T-cell (primary cell): ENCODE measurements at regions of chr1 and their contacts with region 1.

Region 1: DNA sequence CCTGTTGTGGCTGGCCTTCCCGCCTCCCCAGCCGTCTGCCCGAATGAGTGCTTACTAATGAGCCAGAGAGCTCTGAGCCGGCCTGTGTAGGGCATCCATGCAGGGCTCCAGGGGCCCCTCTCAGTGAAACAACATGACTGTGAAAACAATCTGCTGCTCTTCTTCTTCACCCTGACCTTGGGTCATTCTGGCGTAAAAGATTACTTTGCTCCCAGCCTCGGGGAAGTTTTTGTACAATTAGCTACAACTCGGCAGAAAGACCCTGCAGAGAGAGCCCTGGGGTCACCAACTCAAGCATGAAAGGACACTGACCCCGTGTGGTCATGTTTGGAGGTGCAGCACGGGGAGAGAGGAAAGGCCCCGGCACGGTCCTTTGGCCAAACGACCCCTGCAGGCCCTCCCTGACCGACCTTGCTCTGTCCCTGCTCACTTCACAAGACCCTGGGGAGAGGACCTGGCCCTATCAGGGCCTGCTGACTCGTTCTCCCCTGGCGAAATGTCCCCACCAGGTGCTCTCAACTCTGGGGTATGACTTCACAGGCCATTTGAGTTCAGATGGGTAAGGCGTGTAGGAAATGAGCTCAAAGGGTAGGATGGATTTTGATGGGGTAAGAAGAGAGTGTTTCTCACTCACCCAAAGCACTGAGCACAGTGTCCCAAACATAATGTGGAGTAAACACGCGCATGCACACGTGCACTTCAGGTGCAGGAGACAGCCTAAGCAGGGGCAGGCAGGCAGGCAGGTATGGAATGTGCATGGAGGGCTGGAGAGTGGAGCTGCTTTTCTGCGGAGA is 22.9 kb upstream of the FAM20B start:
- DNase-seq: peak in 33 of 35 experiments; percentile 16 to 74 (median 53)
- ATAC-seq: peak; percentile 74 to 78 (median 76)
- H3K4me3 ChIP-seq: no peak overlapping the region
- H3K4me3 Mint-ChIP-seq: peak overlapping the region in 1 of 3 donors; percentile 40
- H3K27ac ChIP-seq: peak overlapping the region; percentile 16
- H3K27ac Mint-ChIP-seq: peak overlapping the region; percentile 12 to 89
- H3K4me1 ChIP-seq: peaks cover 4 to 23% of the 10 kb centered on the region in 2 experiments
- H3K4me1 Mint-ChIP-seq: peaks cover 18 to 20% (median 19%) of the 10 kb centered on the region in 3 donors
- H3K27me3 ChIP-seq: peaks cover 0 to 6% of the 10 kb centered on the region in 2 experiments
- H3K27me3 Mint-ChIP-seq: no peaks in the 10 kb centered on the region

Region 2: GRCh38 chr1:178532392-178532791 is 470.4 kb before region 1 on chr1:
- CTCF ChIA-PET with region 1: interaction called, 4 to 21 read pairs
- POLR2A ChIA-PET with region 1: no interaction called
- DNase-seq: peak in 34 of 35 experiments; percentile 36 to 85 (median 61)
- ATAC-seq: peak; percentile 73 to 80 (median 75)
- H3K4me3 ChIP-seq: no peak overlapping the region
- H3K4me3 Mint-ChIP-seq: no peak overlapping the region
- H3K27ac ChIP-seq: no peak overlapping the region
- H3K27ac Mint-ChIP-seq: no peak overlapping the region
- H3K4me1 ChIP-seq: peaks cover 0 to 7% of the 10 kb centered on the region in 2 experiments
- H3K4me1 Mint-ChIP-seq: peaks cover 0 to 4% (median 3%) of the 10 kb centered on the region in 3 donors
- H3K27me3 ChIP-seq: peaks cover 0 to 2% of the 10 kb centered on the region in 2 experiments
- H3K27me3 Mint-ChIP-seq: peaks cover 0 to 2% of the 10 kb centered on the region in 2 donors

Region 3: GRCh38 chr1:178542560-178543356 is 460.0 kb before region 1 on chr1:
- CTCF ChIA-PET with region 1: interaction called in 1 of 2 experiments, 12 read pairs
- POLR2A ChIA-PET with region 1: no interaction called
- DNase-seq: peak; percentile 53 to 90 (median 78)
- ATAC-seq: peak; percentile 90 to 92 (median 91)
- H3K4me3 ChIP-seq: peak overlapping the region; percentile 77 to 92
- H3K4me3 Mint-ChIP-seq: peak overlapping the region; percentile 84 to 90 (median 88)
- H3K27ac ChIP-seq: peak overlapping the region; percentile 28
- H3K27ac Mint-ChIP-seq: peak overlapping the region; percentile 61 to 88
- H3K4me1 ChIP-seq: peaks cover 0 to 19% of the 10 kb centered on the region in 2 experiments
- H3K4me1 Mint-ChIP-seq: peaks cover 9 to 21% (median 11%) of the 10 kb centered on the region in 3 donors
- H3K27me3 ChIP-seq: peaks cover 0 to 7% of the 10 kb centered on the region in 2 experiments
- H3K27me3 Mint-ChIP-seq: peaks cover 0 to 4% of the 10 kb centered on the region in 2 donors

Region 4: DNA sequence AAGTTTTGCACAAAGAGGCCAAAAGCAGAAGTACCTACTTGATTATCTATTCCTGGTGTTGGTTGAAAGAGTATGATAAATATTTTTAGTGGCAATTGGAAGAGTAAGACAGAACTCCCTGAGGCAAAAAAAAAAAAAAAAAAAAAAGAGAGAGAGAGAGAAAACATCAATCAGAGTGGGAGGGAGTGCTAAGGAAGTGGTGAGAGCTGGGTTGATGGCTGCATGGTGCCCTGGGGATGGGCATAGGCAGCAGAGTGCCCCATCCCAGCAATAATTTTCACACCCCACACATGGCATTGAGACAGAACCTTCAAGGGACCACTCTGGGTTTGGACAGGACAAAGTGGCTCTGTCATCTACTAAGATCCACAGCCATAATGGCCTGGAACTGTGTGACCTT is 36.4 kb before region 1 on chr1:
- CTCF ChIA-PET with region 1: no interaction called
- POLR2A ChIA-PET with region 1: no interaction called
- DNase-seq: no peak
- ATAC-seq: no peak
- H3K4me3 ChIP-seq: no peak overlapping the region
- H3K4me3 Mint-ChIP-seq: no peak overlapping the region
- H3K27ac ChIP-seq: no peak overlapping the region
- H3K27ac Mint-ChIP-seq: no peak overlapping the region
- H3K4me1 ChIP-seq: no peaks in the 10 kb centered on the region
- H3K4me1 Mint-ChIP-seq: no peaks in the 10 kb centered on the region
- H3K27me3 ChIP-seq: peaks cover 0 to 5% of the 10 kb centered on the region in 2 experiments
- H3K27me3 Mint-ChIP-seq: peaks cover 0 to 5% of the 10 kb centered on the region in 2 donors

Region 5: GRCh38 chr1:179840107-179840506 is 837.4 kb after region 1 on chr1:
- CTCF ChIA-PET with region 1: no interaction called
- POLR2A ChIA-PET with region 1: no interaction called
- DNase-seq: no peak
- ATAC-seq: no peak
- H3K4me3 ChIP-seq: no peak overlapping the region
- H3K4me3 Mint-ChIP-seq: no peak overlapping the region
- H3K27ac ChIP-seq: no peak overlapping the region
- H3K27ac Mint-ChIP-seq: no peak overlapping the region
- H3K4me1 ChIP-seq: no peaks in the 10 kb centered on the region
- H3K4me1 Mint-ChIP-seq: no peaks in the 10 kb centered on the region
- H3K27me3 ChIP-seq: no peaks in the 10 kb centered on the region
- H3K27me3 Mint-ChIP-seq: no peaks in the 10 kb centered on the region